Activated T-helper 1 cell treated with anti-CD3 and anti-CD28 coated beads, Interleukin-12 subunit alpha, Interleukin-12 subunit beta, Interleukin-2, Interleukin-4 antibody, amounts not matched to agents 30 ng/mL and 10 ng/mL and 1 ng/mL, durations not matched to agents 14 hours and 24 hours and 36 hours (primary cell): ENCODE measurements at regions of chr7 and their contacts with region 1.

Region 1: GRCh38 chr7:88344956-88345832 is 38.5 kb upstream of the STEAP4 start:
- DNase-seq: no peak
- H3K4me3 Mint-ChIP-seq: no peak overlapping the region
- H3K27ac Mint-ChIP-seq: no peak overlapping the region
- H3K4me1 Mint-ChIP-seq: peaks cover 11% of the 10 kb centered on the region
- H3K27me3 Mint-ChIP-seq: peaks cover 8% of the 10 kb centered on the region

Region 2: DNA sequence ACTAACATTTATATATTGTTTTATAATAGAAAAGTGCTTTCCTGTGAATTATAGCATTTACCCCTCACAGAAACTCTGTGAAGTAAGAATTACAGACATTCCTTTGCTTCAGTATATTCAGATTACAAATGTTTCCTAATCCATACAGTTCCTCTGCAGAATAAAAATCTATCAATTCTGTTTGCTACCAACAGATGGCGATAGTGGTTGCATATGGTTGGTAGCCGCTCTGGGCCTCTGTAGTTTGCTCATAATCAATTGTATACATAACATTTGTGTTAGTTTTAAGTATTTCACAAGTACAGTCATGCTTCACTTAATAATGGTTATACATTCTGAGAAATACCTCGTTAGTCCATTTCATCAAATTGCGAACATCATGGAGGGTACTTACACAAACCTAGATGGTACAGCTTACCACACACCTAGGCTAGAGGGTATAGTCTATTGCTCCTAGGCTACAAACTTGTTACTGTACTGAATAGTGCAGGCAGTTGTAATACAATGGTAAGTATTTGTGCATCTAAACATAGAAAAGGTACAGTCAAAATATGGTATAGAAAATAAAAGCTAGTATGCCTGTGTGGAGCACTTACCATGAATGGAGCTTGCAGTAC is 55.9 kb after region 1 on chr7:
- intact Hi-C with region 1: loop called (anchors 2 kb)
- DNase-seq: no peak
- H3K4me3 Mint-ChIP-seq: no peak overlapping the region
- H3K27ac Mint-ChIP-seq: no peak overlapping the region
- H3K4me1 Mint-ChIP-seq: peaks cover 6% of the 10 kb centered on the region
- H3K27me3 Mint-ChIP-seq: no peaks in the 10 kb centered on the region

Region 3: GRCh38 chr7:88664630-88665233 is 319.5 kb after region 1 on chr7:
- intact Hi-C with region 1: no loop called
- DNase-seq: no peak
- H3K4me3 Mint-ChIP-seq: no peak overlapping the region
- H3K27ac Mint-ChIP-seq: no peak overlapping the region
- H3K4me1 Mint-ChIP-seq: no peaks in the 10 kb centered on the region
- H3K27me3 Mint-ChIP-seq: no peaks in the 10 kb centered on the region